ENCODE measurements at regions of chr11 and their contacts with region 1.

Region 1: GRCh38 chr11:43905813-43906241 is 25.2 kb downstream of the ALKBH3 start:
- DNase-seq: no peak
- CTCF ChIP-seq: no peak

Region 2: GRCh38 chr11:43895601-43896000 is 10.2 kb before region 1 on chr11:
- CTCF ChIA-PET with region 1: interaction called, 43 read pairs
- POLR2A ChIA-PET with region 1: no interaction called
- DNase-seq: no peak
- CTCF ChIP-seq: no peak

Region 3: DNA sequence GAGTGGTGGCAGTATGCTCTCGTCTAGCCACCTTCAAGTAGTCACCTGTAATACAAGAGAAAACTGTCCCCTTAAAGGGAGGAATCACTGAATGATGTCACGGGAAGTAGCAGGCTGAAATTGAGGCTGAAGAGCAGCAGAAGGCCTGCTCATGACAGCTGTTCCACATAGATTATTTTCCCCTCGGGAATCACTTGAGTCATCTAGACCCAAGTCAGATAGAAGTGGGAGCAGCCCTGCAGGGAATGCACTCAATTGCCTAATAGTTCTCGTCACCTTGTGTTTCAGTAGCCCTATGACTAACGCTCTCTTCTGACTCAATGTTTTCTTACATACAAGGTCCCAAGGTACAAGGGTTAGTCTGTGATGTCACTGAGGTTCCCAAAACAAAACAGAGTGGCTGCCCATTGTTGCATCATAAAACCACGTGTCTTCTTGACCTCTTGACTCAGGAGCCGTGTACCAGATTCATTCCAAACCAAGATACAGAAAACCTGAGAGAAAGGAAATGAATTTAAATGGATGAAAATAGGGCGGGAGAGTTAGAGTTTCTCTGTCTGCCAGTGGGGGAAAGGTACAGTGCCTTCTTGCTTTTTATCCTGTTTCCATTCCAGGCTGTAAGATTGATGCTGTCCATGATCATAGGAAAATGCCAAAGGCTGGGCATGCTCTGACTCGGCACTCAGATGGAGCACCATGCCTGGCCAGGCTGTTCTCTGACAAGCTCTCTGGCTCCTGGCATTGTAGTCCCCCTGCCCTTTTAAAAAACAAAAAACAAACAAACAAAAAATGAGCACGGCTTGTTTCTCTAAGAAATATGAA is 15.0 kb after region 1 on chr11:
- CTCF ChIA-PET with region 1: interaction called, 17 read pairs
- POLR2A ChIA-PET with region 1: no interaction called
- DNase-seq: peak; percentile 16
- CTCF ChIP-seq: no peak

Measured in GM10248 (cell line).